Lower leg skin (tissue), 4 donors: ENCODE measurements at regions of chr18 and their contacts with region 1.

Region 1: GRCh38 chr18:49970319-49970718 is 157.0 kb upstream of the ACAA2 start:
- DNase-seq: no peak
- H3K4me3 ChIP-seq: no peak overlapping the region
- CTCF ChIP-seq: no peak
- POLR2A ChIP-seq: no peak

Region 2: DNA sequence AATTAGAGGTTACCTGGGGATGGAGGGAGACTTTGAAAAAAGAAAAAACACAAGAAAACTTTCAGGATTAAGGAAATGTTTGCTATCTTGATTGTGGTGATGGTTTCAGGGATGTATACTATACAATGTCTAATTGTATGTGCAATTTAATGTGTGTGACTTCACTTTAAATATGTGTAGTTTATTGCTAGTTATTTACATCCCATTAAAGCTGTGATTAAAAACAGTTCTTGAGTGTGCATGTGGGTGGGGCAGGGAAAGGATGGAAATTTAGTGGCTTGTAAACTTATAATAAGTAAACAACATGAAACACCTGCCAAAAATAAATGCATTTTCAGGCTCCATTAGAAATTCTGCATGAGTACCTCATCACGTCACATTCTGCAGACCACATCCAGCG is 57.7 kb after region 1 on chr18:
- intact Hi-C with region 1: loop called (anchors 10 kb)
- DNase-seq: no peak
- H3K4me3 ChIP-seq: no peak overlapping the region
- CTCF ChIP-seq: no peak
- POLR2A ChIP-seq: no peak